Activated CD4-positive, alpha-beta memory T cell treated with anti-CD3 and anti-CD28 coated beads for 36 hours (primary cell): ENCODE measurements at regions of chr1 and their contacts with region 1.

Region 1: DNA sequence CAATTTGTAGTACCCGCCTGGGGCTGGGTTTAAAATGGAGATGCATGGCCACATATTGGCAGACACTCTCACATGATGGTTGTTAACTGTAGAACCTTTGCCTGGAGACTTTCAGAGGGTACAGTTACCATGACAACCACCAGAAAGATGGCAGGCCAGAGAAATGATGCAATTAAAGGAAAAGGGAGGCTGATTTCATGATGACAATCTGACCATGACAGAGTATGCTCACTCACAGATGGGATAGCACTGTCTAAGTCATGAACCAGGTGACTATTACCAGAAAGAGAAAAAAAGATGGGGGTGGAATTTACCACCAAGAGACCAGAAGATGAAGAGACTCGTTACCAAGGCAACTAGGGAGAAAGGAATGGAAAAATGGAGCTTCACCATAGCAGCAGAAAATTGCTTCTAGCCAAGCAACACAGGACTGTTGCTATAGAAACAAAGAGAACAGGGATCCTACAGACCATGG is 3.5 kb upstream of the TRIT1 start:
- DNase-seq: no peak
- H3K4me3 Mint-ChIP-seq: no peak overlapping the region
- H3K27ac Mint-ChIP-seq: no peak overlapping the region
- H3K4me1 Mint-ChIP-seq: peaks cover 9% of the 10 kb centered on the region
- H3K27me3 Mint-ChIP-seq: peaks cover 4% of the 10 kb centered on the region

Region 2: GRCh38 chr1:39845275-39846116 is 41.3 kb before region 1 on chr1:
- CTCF ChIA-PET with region 1: interaction called, 3 read pairs
- POLR2A ChIA-PET with region 1: interaction called, 3 read pairs
- intact Hi-C with region 1: loop called (anchors 2 kb)
- DNase-seq: peak; percentile 90
- H3K4me3 Mint-ChIP-seq: peak overlapping the region; percentile 9
- H3K27ac Mint-ChIP-seq: peak overlapping the region; percentile 64
- H3K4me1 Mint-ChIP-seq: peaks cover 59% of the 10 kb centered on the region
- H3K27me3 Mint-ChIP-seq: no peaks in the 10 kb centered on the region